ENCODE measurements at regions of chr10 and their contacts with region 1.

Region 1: DNA sequence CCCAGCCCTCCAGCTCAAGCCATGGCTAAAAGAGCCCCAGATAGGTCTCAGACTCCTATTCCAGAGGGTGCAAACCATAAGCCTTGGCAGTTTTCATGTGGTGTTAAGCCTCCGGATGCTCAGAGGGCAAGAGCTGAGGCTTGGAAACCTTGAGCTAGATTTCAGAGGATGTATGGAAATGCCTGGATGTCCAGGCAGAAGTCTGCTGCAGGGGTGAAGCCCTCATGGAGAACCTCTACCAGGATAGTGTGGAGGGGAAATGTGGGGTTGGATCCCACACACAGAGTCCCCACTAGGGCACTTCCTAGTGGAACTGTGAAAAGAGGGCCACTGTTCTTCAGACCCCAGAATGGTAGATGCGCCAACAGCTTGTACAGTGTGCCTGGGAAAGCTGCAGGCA is 13.2 kb upstream of the HPSE2 start:
- DNase-seq: no peak
- H3K4me3 ChIP-seq: no peak overlapping the region
- H3K27ac ChIP-seq: no peak overlapping the region
- H3K4me1 ChIP-seq: no peaks in the 10 kb centered on the region
- H3K27me3 ChIP-seq: no peaks in the 10 kb centered on the region
- CTCF ChIP-seq: no peak

Region 2: GRCh38 chr10:98467506-98468346 is 781.1 kb before region 1 on chr10:
- intact Hi-C with region 1: loop called (anchors 1 kb)
- DNase-seq: peak in 1 of 2 donors; percentile 87
- H3K4me3 ChIP-seq: peak overlapping the region; percentile 59 to 68
- H3K27ac ChIP-seq: no peak overlapping the region
- H3K4me1 ChIP-seq: peaks cover 0 to 3% of the 10 kb centered on the region in 2 donors
- H3K27me3 ChIP-seq: no peaks in the 10 kb centered on the region
- CTCF ChIP-seq: peak; percentile 76 to 88 (median 78)

Region 3: DNA sequence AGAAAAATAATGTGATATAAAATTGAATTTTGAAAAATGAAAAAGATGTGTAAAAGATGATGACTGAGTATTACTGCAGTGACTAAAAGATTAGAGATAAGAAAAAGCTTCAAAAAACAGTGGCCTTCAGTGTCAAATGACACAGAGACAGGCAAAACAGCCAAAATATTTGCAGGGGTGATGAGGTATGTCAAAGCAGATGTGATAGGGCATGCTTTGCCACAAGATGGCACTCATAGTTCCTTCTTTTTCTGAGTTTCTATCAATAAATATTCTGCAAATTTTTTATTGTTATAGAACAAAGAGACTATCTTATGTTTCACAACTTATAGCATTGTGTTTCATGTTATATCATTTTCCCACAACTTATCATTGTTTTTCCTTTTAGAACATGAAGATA is 458.0 kb before region 1 on chr10:
- intact Hi-C with region 1: loop called (anchors 5 kb)
- DNase-seq: no peak
- H3K4me3 ChIP-seq: no peak overlapping the region
- H3K27ac ChIP-seq: no peak overlapping the region
- H3K4me1 ChIP-seq: no peaks in the 10 kb centered on the region
- H3K27me3 ChIP-seq: no peaks in the 10 kb centered on the region
- CTCF ChIP-seq: peak in 2 of 3 experiments; percentile 23 to 39

Region 4: GRCh38 chr10:99315853-99316252 is 67.0 kb after region 1 on chr10:
- intact Hi-C with region 1: no loop called
- DNase-seq: no peak
- H3K4me3 ChIP-seq: no peak overlapping the region
- H3K27ac ChIP-seq: no peak overlapping the region
- H3K4me1 ChIP-seq: no peaks in the 10 kb centered on the region
- H3K27me3 ChIP-seq: no peaks in the 10 kb centered on the region
- CTCF ChIP-seq: no peak

Region 5: DNA sequence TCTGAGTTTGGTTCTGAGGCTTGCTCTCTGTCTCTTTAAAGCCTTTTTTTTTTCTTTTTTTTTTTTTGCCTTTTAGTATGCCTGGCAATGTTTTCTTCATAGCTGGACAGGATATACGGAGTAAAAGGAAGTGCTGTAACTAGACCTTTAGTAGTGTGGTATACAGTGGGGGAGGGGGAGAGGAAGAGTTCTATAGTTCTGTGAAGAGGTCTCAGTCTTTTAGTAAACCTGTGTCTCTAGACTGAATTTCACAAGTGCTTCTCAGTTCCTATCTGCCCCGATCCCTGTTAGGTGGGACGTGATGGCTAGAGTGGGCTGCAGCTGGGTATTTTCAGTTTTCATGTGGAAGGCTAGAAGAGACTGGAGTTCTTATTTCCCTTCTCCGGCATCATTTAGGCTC is 530.5 kb after region 1 on chr10:
- intact Hi-C with region 1: no loop called
- DNase-seq: no peak
- H3K4me3 ChIP-seq: no peak overlapping the region
- H3K27ac ChIP-seq: peak overlapping the region in 1 of 2 donors; percentile 32
- H3K4me1 ChIP-seq: no peaks in the 10 kb centered on the region
- H3K27me3 ChIP-seq: no peaks in the 10 kb centered on the region
- CTCF ChIP-seq: no peak